AG04449 (cell line): ENCODE measurements at regions of chr7 and their contacts with region 1.

Region 1: DNA sequence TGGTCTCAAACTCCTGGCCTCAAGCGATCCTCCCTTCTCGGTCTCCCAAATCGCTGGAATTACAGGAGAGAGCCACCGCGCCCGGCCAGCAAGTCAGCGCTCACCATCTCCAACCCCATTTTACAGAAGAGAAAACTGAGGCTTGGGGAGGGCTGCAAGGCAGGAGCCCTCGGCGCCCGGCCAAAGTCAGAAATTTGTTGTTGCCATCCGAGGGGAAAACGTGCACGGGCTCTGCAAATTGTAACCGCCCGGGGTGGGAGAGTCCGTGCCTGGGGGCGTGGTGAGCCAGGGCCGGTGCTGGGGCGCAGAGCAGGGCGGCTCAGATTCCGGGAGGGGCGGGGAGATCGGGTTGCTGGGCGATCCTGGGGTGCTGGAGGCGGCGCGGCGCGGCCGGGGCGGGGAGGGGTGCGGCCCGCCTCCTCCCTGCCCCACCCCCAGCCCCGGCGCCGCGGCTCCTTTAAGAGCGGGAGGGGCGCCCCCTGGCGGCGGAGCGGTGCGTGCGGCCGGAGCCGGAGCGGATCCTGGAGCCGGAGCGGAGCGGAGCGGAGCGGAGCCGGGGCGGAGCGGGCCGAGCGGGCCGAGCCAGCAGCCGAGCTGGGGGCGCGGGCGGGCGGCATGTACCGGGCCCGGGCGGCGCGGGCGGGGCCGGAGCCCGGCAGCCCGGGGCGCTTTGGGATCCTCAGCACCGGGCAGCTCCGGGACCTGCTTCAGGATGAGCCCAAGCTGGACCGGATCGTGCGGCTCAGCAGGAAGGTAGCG is at the start of gene VPS37D:
- DNase-seq: peak; percentile 3
- H3K4me3 ChIP-seq: peak within 1 kb of the TSS; percentile 72
- CTCF ChIP-seq: peak; percentile 84

Region 2: DNA sequence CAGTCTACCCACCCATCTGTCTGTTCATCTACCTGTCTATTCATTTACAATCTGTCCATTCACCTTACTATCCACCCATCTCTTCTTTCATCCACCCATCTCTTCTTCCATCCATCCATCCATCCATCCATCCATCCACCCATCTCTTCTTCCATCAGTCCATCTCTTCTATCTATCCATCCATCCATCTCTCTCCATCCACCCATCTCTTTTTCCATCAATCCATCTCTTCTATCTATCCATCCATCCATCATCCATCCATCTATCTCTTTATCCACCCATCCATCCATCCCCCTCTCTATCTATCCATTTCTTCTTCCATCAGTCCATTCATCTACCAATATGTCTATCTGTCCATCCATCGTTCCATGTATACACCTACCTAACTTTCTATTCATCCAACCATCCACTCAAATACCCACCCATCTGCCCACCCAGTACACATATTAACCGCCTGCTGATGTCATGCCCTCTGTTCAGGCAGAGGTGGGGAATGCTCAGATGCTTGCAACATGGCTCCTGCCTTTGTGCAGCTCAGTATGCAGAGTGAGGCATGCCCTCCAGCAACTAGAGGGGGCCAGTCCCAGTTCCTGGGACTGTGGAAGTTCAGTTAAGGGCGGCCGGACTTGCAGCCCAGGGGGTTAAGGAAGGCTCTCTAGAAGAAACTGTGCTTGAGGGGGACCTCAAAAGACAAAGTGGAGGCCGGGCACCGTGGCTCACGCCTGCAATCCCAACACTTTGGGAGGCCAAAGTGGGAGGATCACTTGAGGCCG is 31.9 kb before region 1 on chr7:
- CTCF ChIA-PET with region 1: interaction called, 13 read pairs
- POLR2A ChIA-PET with region 1: no interaction called
- DNase-seq: no peak
- H3K4me3 ChIP-seq: no peak overlapping the region
- CTCF ChIP-seq: no peak

Region 3: GRCh38 chr7:73681031-73681430 is 13.5 kb after region 1 on chr7:
- CTCF ChIA-PET with region 1: interaction called, 13 read pairs
- POLR2A ChIA-PET with region 1: no interaction called
- DNase-seq: no peak
- H3K4me3 ChIP-seq: no peak overlapping the region; the same call in 1 of the 2 replicates
- CTCF ChIP-seq: no peak